GM12878 (cell line): ENCODE measurements at regions of chr2 and their contacts with region 1.

Region 1: GRCh38 chr2:55771612-55772011 is 78.0 kb upstream of the PNPT1 start:
- DNase-seq: no peak
- ATAC-seq: no peak
- H3K4me3 ChIP-seq: no peak overlapping the region
- H3K27ac ChIP-seq: no peak overlapping the region
- H3K4me1 ChIP-seq: no peaks in the 10 kb centered on the region
- H3K27me3 ChIP-seq: no peaks in the 10 kb centered on the region; a peak in 1 of 4 replicates
- CTCF ChIP-seq: peak in 2 of 3 experiments; percentile 21 to 31; a peak in 3 of 6 replicates
- EP300 ChIP-seq: no peak
- POLR2A ChIP-seq: no peak
- RAD21 ChIP-seq: peak; percentile 42

Region 2: GRCh38 chr2:55966401-55967118 is 194.9 kb after region 1 on chr2:
- CTCF ChIA-PET with region 1: interaction called, 61 read pairs
- POLR2A ChIA-PET with region 1: no interaction called
- RAD21 ChIA-PET with region 1: interaction called, 28 read pairs
- SMC1A ChIA-PET with region 1: interaction called, 45 read pairs
- in situ Hi-C with region 1: no loop called
- intact Hi-C with region 1: loop called (anchors 1 kb)
- DNase-seq: no peak
- ATAC-seq: no peak
- H3K4me3 ChIP-seq: no peak overlapping the region
- H3K27ac ChIP-seq: no peak overlapping the region
- H3K4me1 ChIP-seq: no peaks in the 10 kb centered on the region
- H3K27me3 ChIP-seq: peaks cover 0 to 1% of the 10 kb centered on the region in 2 experiments; a peak in 1 of 4 replicates
- CTCF ChIP-seq: no peak
- EP300 ChIP-seq: no peak
- POLR2A ChIP-seq: no peak
- RAD21 ChIP-seq: no peak

Region 3: GRCh38 chr2:56009758-56010458 is 238.3 kb after region 1 on chr2:
- CTCF ChIA-PET with region 1: interaction called, 5 read pairs
- POLR2A ChIA-PET with region 1: no interaction called
- RAD21 ChIA-PET with region 1: no interaction called
- SMC1A ChIA-PET with region 1: interaction called, 4 read pairs
- in situ Hi-C with region 1: no loop called
- intact Hi-C with region 1: loop called (anchors 2 kb)
- DNase-seq: no peak
- ATAC-seq: no peak
- H3K4me3 ChIP-seq: no peak overlapping the region
- H3K27ac ChIP-seq: no peak overlapping the region
- H3K4me1 ChIP-seq: no peaks in the 10 kb centered on the region
- H3K27me3 ChIP-seq: no peaks in the 10 kb centered on the region
- CTCF ChIP-seq: peak in 2 of 3 experiments; percentile 42 to 46; a peak in 4 of 6 replicates
- EP300 ChIP-seq: no peak
- POLR2A ChIP-seq: no peak
- RAD21 ChIP-seq: peak; percentile 53